HCT116 (cell line): ENCODE measurements at regions of chr20 and their contacts with region 1.

Region 1: GRCh38 chr20:51750037-51750763 is 18.0 kb downstream of the ATP9A start:
- DNase-seq: peak; percentile 96
- ATAC-seq: peak; percentile 86
- H3K4me3 ChIP-seq: peak overlapping the region; percentile 22 to 30
- H3K27ac ChIP-seq: peak overlapping the region; percentile 87
- H3K4me1 ChIP-seq: peaks cover 59 to 80% of the 10 kb centered on the region in 2 experiments
- H3K27me3 ChIP-seq: no peaks in the 10 kb centered on the region
- CTCF ChIP-seq: no peak
- POLR2A ChIP-seq: no peak
- RAD21 ChIP-seq: no peak

Region 2: DNA sequence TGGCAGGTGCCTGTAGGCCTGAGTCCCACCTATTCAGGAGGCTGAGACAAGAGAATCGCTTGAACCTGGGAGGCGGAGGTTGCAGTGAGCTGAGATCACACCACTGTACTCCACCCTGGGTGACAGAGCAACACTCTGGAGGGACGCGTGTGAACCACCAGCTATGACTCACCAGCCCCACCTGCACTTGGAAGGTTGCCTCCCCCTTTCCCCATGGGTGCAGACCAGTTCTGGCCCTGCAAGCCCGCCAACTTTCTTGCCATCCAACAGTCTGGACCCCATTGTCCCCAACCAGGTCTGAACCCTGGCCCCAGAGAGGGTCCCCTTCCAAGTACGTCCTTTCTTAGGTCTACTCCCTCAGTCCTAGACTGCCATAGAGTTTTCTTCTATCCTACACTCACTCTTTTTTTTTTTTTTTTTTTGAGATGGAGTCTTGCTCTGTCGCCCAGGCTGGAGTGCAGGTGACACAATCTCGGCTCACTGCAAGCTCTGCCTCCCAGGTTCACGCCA is 11.2 kb before region 1 on chr20:
- CTCF ChIA-PET with region 1: interaction called, 4 read pairs
- POLR2A ChIA-PET with region 1: interaction called, 10 read pairs
- RAD21 ChIA-PET with region 1: interaction called in 1 of 2 experiments, 4 read pairs
- intact Hi-C with region 1: no loop called
- DNase-seq: peak; percentile 80
- ATAC-seq: peak; percentile 82
- H3K4me3 ChIP-seq: peak overlapping the region; percentile 17 to 45
- H3K27ac ChIP-seq: peak overlapping the region; percentile 86
- H3K4me1 ChIP-seq: peaks cover 58 to 82% of the 10 kb centered on the region in 2 experiments
- H3K27me3 ChIP-seq: no peaks in the 10 kb centered on the region
- CTCF ChIP-seq: no peak
- POLR2A ChIP-seq: no peak
- RAD21 ChIP-seq: no peak

Region 3: GRCh38 chr20:51760905-51761546 is 10.8 kb after region 1 on chr20:
- CTCF ChIA-PET with region 1: interaction called, 5 read pairs
- POLR2A ChIA-PET with region 1: interaction called, 15 read pairs
- RAD21 ChIA-PET with region 1: no interaction called
- intact Hi-C with region 1: no loop called
- DNase-seq: no peak
- ATAC-seq: peak; percentile 58
- H3K4me3 ChIP-seq: 0 out of 4 replicates have a peak overlapping the region, but pooled peaks of 1 of the 2 experiments have one; percentile 16
- H3K27ac ChIP-seq: peak overlapping the region; percentile 51
- H3K4me1 ChIP-seq: peaks cover 47 to 75% of the 10 kb centered on the region in 2 experiments
- H3K27me3 ChIP-seq: no peaks in the 10 kb centered on the region
- CTCF ChIP-seq: no peak
- POLR2A ChIP-seq: no peak
- RAD21 ChIP-seq: no peak

Region 4: DNA sequence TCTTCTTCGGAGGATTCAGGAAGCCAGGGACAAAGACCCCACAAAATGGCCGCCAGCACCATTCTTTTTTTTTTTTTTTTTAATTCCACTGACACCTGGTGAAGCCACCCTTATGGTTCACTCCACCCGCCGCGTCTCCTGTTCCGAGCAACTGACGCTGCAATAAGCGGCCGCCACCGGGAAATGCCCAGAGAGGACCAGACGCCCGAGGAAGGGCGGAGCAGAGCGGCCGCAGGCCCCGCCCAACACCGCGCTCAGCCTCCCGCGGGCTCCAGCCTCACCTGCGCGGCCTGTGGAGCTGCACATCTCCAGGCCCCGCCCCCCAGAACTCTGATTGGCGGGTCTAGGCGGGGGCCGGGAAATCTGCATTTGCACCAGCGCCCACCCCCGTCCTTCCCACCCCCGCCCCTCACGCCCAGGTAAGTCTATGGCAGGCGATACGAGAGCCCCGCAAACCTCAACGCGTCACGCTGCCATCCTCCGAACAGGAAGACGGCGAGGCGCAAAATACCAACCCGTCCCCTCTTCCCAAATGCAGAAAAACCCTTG is 16.9 kb after region 1 on chr20:
- CTCF ChIA-PET with region 1: interaction called, 5 read pairs
- POLR2A ChIA-PET with region 1: interaction called, 10 read pairs
- RAD21 ChIA-PET with region 1: interaction called, 3 to 5 read pairs
- intact Hi-C with region 1: no loop called
- DNase-seq: peak; percentile 85
- ATAC-seq: peak; percentile 95
- H3K4me3 ChIP-seq: peak overlapping the region; percentile 74 to 88
- H3K27ac ChIP-seq: peak overlapping the region; percentile 89
- H3K4me1 ChIP-seq: peaks cover 23 to 47% of the 10 kb centered on the region in 2 experiments
- H3K27me3 ChIP-seq: no peaks in the 10 kb centered on the region
- CTCF ChIP-seq: no peak
- POLR2A ChIP-seq: peak; percentile 50
- RAD21 ChIP-seq: no peak